ENCODE measurements at regions of chr11 and their contacts with region 1.

Region 1: DNA sequence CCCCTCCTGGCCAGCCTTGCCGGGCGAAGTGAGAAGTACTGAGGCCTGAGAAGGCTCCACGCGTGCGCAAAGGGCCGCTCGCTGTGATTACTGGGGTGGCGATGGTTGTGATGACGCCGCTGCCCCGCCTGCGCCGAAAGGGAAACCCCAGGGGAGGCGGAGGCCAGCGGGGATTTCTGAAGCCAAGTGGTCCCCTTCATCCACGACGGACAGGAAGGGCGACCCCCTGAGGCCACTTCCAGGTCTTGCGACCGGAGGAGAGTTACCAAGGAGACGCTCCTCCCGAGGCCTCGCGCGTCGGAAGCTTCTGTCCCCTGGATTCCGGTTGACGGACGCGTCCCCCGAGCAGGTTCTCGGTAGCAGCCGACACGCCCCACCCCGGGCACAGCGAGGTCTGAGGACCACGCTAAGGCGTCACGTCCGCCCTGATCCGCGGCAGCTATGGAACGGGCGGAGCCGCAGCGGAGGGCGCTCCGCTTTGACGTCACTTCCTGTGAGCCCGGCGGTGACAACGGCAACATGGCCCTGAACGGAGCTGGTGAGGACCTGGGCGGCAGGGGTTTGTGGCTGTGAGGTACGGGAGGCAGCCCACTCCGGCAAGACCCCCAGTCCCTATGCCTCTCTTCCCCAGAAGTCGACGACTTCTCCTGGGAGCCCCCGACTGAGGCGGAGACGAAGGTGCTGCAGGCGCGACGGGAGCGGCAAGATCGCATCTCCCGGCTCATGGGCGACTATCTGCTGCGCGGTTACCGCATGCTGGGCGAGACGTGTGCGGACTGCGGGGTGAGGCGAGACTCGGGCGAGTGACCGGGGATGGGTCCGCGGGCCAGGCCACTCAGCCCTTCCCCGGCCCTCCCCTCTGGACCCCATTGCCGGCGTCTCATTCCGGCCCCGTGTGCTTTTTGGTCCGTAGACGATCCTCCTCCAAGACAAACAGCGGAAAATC is at the start of gene ZNRD2:
- DNase-seq: peak; percentile 99
- H3K4me3 Mint-ChIP-seq: peak within 1 kb of the TSS; percentile 97
- H3K27ac Mint-ChIP-seq: peak within 1 kb of the TSS; percentile 98
- H3K4me1 Mint-ChIP-seq: peaks cover 57% of the 10 kb centered on the region
- H3K27me3 Mint-ChIP-seq: no peaks in the 10 kb centered on the region
- total RNA-seq, gene ZNRD2: 63.6 and 63.8 TPM in 2 replicates

Region 2: GRCh38 chr11:65027213-65028067 is 542.8 kb before region 1 on chr11 and contains the start of gene SNX15:
- intact Hi-C with region 1: loop called (anchors 5 kb)
- DNase-seq: peak; percentile 88
- H3K4me3 Mint-ChIP-seq: peak within 1 kb of the TSS; percentile 76
- H3K27ac Mint-ChIP-seq: peak within 1 kb of the TSS; percentile 87
- H3K4me1 Mint-ChIP-seq: peaks cover 15% of the 10 kb centered on the region
- H3K27me3 Mint-ChIP-seq: peaks cover 2% of the 10 kb centered on the region
- total RNA-seq, gene SNX15: 19.6 and 22.4 TPM in 2 replicates

Region 3: GRCh38 chr11:65204646-65205601 is 365.3 kb before region 1 on chr11:
- intact Hi-C with region 1: no loop called
- DNase-seq: no peak
- H3K4me3 Mint-ChIP-seq: no peak overlapping the region
- H3K27ac Mint-ChIP-seq: no peak overlapping the region
- H3K4me1 Mint-ChIP-seq: peaks cover 4% of the 10 kb centered on the region
- H3K27me3 Mint-ChIP-seq: no peaks in the 10 kb centered on the region

Region 4: GRCh38 chr11:65401073-65401802 is 169.0 kb before region 1 on chr11:
- intact Hi-C with region 1: no loop called
- DNase-seq: no peak
- H3K4me3 Mint-ChIP-seq: no peak overlapping the region
- H3K27ac Mint-ChIP-seq: no peak overlapping the region
- H3K4me1 Mint-ChIP-seq: no peaks in the 10 kb centered on the region
- H3K27me3 Mint-ChIP-seq: no peaks in the 10 kb centered on the region

Region 5: DNA sequence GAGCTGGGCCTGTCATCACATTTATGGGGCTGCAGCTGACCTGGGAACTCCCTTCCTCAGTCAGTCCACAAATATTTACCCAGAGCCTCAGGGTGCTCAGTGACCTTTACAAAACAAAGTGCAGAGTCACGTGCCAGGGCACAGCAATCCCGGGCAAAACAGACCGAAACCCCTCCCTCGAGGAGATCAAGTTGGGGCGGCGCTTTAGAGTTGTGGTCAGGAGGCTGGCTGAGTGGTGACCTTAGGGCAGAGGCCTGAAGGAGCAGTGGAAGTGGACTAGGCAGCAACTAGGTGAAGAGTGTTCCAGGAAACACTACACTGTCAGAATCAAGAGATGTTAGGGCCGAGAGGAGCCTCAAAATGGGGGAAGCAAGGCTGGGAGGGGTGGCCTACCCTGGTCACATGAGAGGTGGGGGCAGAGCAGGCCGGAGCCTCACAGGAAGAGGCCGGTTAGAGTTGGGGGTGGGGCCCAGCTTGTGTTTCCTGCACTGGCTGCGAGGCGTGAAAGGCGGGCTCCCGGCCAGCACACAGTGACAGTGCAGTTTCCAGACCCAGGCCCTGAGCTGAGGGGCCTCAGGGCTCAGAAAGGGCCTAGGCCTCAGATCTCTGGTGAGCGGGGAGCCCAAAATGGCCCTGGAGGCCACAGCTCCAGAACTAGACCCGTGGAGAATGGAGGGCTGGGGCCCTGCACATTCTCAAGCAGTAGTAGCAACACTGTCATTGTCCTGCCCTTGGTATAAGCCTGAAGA is 151.4 kb before region 1 on chr11:
- intact Hi-C with region 1: loop called (anchors 2 kb)
- DNase-seq: peak; percentile 90
- H3K4me3 Mint-ChIP-seq: peak overlapping the region; percentile 98
- H3K27ac Mint-ChIP-seq: peak overlapping the region; percentile 100
- H3K4me1 Mint-ChIP-seq: peaks cover 39% of the 10 kb centered on the region
- H3K27me3 Mint-ChIP-seq: no peaks in the 10 kb centered on the region

Region 6: DNA sequence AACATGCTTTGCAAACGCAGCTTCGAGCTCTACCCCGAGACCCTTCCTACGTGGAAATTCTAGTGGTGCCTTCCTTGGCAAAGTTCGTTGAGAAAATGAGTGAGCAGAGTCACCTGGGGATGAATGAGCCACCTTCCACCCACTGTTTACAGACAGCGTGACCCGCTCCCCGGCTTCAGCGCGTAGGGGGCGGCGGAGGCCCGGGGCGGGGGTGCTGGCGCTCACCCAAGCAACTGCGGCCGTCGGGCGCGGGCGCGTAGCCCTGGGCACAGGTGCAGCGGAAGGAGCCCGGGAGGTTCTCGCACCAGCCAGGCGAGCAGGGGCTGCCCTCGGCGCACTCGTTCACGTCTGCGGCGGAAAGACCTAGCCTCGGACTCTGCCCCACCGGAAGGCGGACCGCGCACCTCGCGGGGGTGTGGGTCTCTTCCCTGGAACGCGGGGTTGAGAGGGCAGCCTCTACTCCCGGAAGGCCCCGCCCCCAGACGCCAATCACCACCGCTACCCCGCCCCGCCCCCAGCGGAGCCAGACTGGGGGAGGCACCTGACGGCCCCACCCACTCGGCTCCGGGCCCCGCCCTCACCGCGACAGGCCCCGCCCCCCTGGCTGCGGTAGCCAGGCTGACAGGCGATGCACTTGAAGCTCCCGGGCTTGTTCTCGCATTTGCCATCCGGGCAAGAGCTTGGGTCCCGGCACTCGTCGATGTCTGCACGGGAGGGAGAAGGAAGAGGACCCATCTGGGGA is 23.9 kb before region 1 on chr11:
- intact Hi-C with region 1: loop called (anchors 1 kb)
- DNase-seq: peak; percentile 97
- H3K4me3 Mint-ChIP-seq: peak overlapping the region; percentile 76
- H3K27ac Mint-ChIP-seq: peak overlapping the region; percentile 81
- H3K4me1 Mint-ChIP-seq: peaks cover 35% of the 10 kb centered on the region
- H3K27me3 Mint-ChIP-seq: no peaks in the 10 kb centered on the region

Region 7: GRCh38 chr11:65615229-65615941 is 45.1 kb after region 1 on chr11 and contains the start of gene PCNX3:
- intact Hi-C with region 1: loop called (anchors 1 kb)
- DNase-seq: peak; percentile 100
- H3K4me3 Mint-ChIP-seq: peak within 1 kb of the TSS; percentile 98
- H3K27ac Mint-ChIP-seq: peak within 1 kb of the TSS; percentile 94
- H3K4me1 Mint-ChIP-seq: peaks cover 27% of the 10 kb centered on the region
- H3K27me3 Mint-ChIP-seq: no peaks in the 10 kb centered on the region
- total RNA-seq, gene PCNX3: 40.1 and 43.6 TPM in 2 replicates

Region 8: DNA sequence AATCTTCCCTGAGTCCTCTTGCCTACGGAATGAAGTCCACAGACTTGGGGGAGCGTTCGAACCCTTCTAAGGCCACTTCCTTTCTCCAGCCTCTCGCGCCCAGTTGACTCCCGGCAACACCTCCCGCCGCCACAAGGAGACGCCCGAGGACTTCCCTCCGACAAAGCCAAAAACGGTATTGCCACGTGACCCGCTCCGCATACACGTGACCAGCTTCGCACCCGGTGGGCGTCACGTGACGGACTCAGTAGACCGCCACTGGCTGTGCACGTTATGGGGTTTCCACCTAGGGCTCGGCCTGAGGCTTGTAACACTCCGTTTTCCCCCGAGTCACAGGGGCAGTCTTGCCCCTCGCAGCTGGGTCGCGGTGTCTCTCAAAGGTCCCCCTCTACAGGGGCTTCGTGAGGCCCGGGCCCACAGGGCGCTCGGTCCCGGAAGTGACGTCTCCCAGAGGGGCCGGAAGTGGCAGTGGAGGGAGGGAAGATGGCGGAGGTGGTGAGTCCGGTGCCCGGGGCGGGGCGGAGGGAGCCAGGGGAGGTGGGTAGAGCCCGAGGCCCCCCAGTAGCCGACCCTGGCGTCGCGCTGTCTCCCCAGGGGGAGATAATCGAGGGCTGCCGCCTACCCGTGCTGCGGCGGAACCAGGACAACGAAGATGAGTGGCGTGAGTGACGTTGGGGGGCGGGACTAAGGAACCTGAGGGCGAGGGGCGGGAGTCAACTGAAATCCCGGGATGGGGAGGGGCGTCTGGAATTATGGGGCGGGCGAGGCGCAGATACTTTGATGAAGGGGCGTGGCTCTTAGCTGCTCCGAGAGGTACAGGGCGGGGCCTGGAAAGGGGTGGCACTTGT is 141.8 kb after region 1 on chr11 and contains the start of gene KAT5:
- intact Hi-C with region 1: loop called (anchors 5 kb)
- DNase-seq: peak; percentile 99
- H3K4me3 Mint-ChIP-seq: peak within 1 kb of the TSS; percentile 89
- H3K27ac Mint-ChIP-seq: peak within 1 kb of the TSS; percentile 91
- H3K4me1 Mint-ChIP-seq: peaks cover 25% of the 10 kb centered on the region
- H3K27me3 Mint-ChIP-seq: no peaks in the 10 kb centered on the region
- total RNA-seq, gene KAT5: 76.3 and 79.4 TPM in 2 replicates

Measured in activated T-helper 2 cell treated with anti-CD3 and anti-CD28 coated beads, Interferon-gamma antibody, Interleukin-2, Interleukin-4, amounts not matched to agents 10 μg/mL and 5 μg/mL and 100 μg/mL, durations not matched to agents 14 hours and 24 hours and 36 hours (primary cell).